Lower leg skin (tissue), 4 donors: ENCODE measurements at regions of chr7 and their contacts with region 1.

Region 1: DNA sequence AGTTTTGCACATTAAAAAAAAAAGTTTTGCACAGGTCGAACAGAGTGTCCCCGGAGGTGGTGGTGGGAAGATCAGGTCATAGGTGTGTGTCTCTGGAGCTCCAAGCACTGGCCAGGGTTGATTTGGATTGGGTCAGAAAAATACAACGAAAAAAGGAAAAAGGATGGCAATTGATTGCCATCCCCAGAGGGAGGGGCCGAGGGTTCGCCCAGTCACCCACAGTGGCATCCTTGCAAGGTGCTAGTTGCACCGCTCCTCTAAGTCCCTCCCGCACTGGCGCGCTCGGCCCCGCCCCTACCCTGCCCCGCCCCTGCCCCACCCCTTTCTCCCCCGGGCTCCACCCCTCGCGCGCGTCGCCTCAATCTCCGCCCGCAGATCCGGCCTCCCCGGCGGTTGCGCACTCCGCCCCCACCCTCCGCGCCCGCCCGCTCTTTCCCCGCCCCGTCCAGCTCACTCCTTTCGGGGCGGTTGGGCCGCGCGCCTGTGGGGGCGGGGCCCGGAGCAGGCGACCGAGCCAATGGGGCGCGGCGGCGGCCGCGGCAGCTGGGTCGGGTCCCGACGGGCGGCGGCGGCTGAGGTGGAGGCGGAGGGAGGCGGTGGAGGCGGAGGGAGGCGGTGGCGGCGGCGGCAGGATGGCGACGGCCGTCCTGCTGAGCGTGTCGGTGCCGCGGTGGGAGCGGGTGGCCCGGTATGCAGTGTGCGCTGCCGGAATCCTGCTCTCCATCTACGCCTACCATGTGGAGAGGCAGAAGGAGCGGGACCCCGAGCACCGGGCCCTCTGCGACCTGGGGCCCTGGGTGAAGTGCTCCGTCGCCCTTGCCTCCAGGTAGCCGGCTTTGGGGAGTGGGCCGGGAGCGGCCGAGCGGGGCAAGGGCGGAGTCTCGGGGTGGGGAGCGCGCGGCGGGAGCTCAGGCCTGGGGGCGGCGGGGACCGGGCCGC is 31.5 kb upstream of the ERV3-1 start:
- DNase-seq: peak; percentile 88 to 98
- H3K4me3 ChIP-seq: peak overlapping the region; percentile 88
- CTCF ChIP-seq: no peak
- POLR2A ChIP-seq: no peak

Region 2: GRCh38 chr7:65304175-65304574 is 266.2 kb after region 1 on chr7:
- intact Hi-C with region 1: no loop called
- DNase-seq: no peak
- H3K4me3 ChIP-seq: no peak overlapping the region
- CTCF ChIP-seq: no peak
- POLR2A ChIP-seq: no peak

Region 3: DNA sequence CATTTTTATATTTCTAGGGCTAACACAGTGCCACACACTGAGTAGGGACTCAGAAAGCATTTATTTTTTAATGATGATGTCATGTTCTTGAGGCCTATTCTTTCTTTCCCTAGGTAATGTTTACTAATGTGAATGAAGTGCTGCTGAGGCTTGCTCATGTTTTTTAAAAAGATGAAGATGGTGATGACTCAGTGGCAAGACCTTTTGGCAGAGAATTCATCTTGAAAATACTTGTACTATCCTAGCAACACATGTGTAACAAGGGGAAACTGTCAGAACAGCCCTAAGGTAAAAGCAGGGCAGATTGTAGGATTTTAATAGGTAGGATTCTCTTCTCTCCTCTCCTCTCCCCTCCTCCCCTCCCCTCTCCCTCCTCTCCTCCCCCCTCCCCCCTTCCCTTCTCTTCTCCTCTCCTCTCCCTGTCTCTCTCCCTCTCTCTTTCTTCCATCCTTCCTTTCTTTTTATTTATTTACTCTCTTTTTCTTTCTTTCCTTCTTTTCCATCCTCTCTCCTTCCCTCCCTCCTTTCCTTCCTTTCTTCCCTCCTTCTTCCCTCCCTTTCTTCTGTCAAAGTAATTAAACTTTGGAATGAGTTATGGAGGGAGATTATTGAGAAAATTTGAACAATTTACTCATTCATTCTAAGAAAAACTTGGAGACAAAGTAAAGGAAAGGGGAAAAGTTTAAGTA is 411.0 kb after region 1 on chr7:
- intact Hi-C with region 1: loop called (anchors 5 kb)
- DNase-seq: no peak
- H3K4me3 ChIP-seq: no peak overlapping the region
- CTCF ChIP-seq: no peak
- POLR2A ChIP-seq: no peak